ENCODE measurements at regions of chrX and their contacts with region 1.

Region 1: GRCh38 chrX:105829006-105829405 is 6.7 kb downstream of the NRK start:
- DNase-seq: no peak
- H3K4me3 ChIP-seq: no peak overlapping the region
- CTCF ChIP-seq: no peak

Region 2: DNA sequence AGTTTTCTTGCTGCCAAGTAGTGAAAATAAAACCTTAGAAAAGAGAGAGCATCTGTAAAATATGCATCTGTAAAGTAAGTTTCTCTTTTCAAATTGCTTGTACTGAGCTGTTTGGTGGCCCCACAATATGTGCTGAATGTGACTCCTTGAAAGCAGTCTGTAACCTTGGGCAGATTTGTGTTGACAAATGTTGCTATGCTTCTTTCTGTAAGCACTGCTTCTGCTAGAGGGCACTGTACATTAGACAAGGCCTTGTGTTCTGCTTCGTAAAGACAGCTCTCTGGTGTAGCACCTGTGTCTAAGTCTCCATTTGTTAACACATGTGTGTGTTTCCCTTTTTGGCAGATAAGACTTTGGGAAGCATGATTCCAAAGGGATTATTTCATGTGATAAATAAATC is 63.3 kb before region 1 on chrX:
- in situ Hi-C with region 1: loop called (anchors 5 kb)
- DNase-seq: no peak
- H3K4me3 ChIP-seq: no peak overlapping the region
- CTCF ChIP-seq: no peak

Region 3: GRCh38 chrX:105803891-105804290 is 25.1 kb before region 1 on chrX:
- in situ Hi-C with region 1: no loop called
- DNase-seq: no peak
- H3K4me3 ChIP-seq: no peak overlapping the region
- CTCF ChIP-seq: no peak

Measured in astrocyte of the cerebellum (primary cell).